ENCODE measurements at regions of chr4 and their contacts with region 1.

Region 1: DNA sequence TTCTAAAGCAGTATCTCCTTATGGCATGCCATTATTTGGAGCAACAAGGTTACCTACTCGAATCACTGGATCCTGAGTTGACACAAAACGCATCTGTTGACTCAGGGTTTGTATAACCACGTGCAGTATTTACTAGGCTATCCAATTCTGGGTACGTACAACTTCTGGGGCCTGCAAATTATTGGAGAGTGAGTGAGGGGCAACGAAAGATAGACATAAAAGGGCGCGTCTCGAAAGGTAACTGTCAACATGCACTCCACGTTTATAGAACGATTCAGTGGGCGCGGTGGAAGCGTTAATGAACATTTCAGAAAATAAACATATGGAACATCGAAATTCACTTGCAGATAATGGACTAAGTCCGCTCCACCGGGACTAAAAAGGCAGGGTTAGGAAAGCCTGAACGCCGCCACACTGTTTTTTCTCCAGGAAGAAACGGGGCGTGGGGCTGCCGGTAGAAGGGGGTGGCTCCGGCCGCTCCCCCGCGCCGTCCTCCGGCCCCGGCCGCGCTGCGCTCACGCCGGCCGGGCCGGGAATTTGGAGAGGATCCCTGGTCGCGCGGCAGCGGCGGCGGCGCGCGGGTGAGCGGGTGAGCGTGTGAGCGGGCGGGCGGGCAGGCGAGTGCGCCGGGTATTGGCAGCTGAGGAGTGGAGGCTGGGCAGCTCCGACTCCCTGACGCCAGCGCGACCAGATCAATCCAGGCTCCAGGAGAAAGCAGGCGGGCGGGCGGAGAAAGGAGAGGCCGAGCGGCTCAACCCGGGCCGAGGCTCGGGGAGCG is at the start of gene SMAD1:
- DNase-seq: peak; percentile 91
- ATAC-seq: peak; percentile 96
- total RNA-seq, gene SMAD1: 8.9 TPM

Region 2: GRCh38 chr4:145552181-145552822 is 70.9 kb after region 1 on chr4:
- intact Hi-C with region 1: loop called (anchors 5 kb)
- DNase-seq: no peak
- ATAC-seq: no peak